CD4-positive, alpha-beta T cell (primary cell): ENCODE measurements at regions of chr6 and their contacts with region 1.

Region 1: GRCh38 chr6:139161817-139162284 is 27.0 kb downstream of the HECA start:
- DNase-seq: peak in 13 of 14 experiments; percentile 46 to 84 (median 66)
- ATAC-seq: peak; percentile 55
- H3K4me3 ChIP-seq: peak overlapping the region; percentile 11
- H3K4me3 Mint-ChIP-seq: peak overlapping the region; percentile 76
- H3K27ac ChIP-seq: peak overlapping the region; percentile 32 to 70
- H3K27ac Mint-ChIP-seq: peak overlapping the region; percentile 84
- H3K4me1 ChIP-seq: peaks cover 94% of the 10 kb centered on the region
- H3K4me1 Mint-ChIP-seq: peaks cover 88% of the 10 kb centered on the region
- H3K27me3 ChIP-seq: no peaks in the 10 kb centered on the region
- H3K27me3 Mint-ChIP-seq: no peaks in the 10 kb centered on the region
- CTCF ChIP-seq: no peak

Region 2: DNA sequence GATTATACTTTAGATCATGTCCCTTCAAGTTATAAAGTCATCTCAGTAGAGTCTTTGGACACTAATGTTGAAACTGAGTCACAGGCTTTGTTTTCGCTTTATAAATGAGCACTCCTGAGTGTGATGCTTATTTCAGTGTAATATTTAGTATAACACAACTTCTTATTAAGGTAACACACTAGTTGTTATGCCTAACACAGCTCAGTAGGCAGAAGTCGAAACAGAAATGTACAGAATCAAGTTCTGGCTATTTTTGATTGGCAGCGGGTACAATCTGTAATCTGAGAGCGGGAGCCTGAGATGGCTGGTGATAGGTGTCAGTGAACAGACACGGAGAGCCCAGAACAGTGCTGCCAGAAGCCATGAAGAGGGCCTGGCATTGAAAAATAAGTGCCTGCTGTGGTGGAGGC is 15.5 kb before region 1 on chr6:
- CTCF ChIA-PET with region 1: interaction called, 5 read pairs
- POLR2A ChIA-PET with region 1: interaction called, 157 read pairs
- intact Hi-C with region 1: loop called (anchors 1 to 2 kb)
- DNase-seq: peak in 1 of 14 experiments; percentile 38
- ATAC-seq: no peak
- H3K4me3 ChIP-seq: peak overlapping the region; percentile 29
- H3K4me3 Mint-ChIP-seq: peak overlapping the region; percentile 61
- H3K27ac ChIP-seq: peak overlapping the region in 1 of 2 donors; percentile 11
- H3K27ac Mint-ChIP-seq: peak overlapping the region; percentile 80
- H3K4me1 ChIP-seq: peaks cover 76% of the 10 kb centered on the region
- H3K4me1 Mint-ChIP-seq: peaks cover 95% of the 10 kb centered on the region
- H3K27me3 ChIP-seq: no peaks in the 10 kb centered on the region
- H3K27me3 Mint-ChIP-seq: no peaks in the 10 kb centered on the region
- CTCF ChIP-seq: no peak

Region 3: GRCh38 chr6:139173172-139173571 is 11.3 kb after region 1 on chr6:
- CTCF ChIA-PET with region 1: interaction called, 12 read pairs
- POLR2A ChIA-PET with region 1: interaction called, 13 read pairs
- intact Hi-C with region 1: loop called in 1 of 2 experiments (anchors 2 kb)
- DNase-seq: peak in 4 of 14 experiments; percentile 42 to 70 (median 54)
- ATAC-seq: peak; percentile 71
- H3K4me3 ChIP-seq: no peak overlapping the region
- H3K4me3 Mint-ChIP-seq: peak overlapping the region; percentile 40
- H3K27ac ChIP-seq: peak overlapping the region; percentile 31 to 49
- H3K27ac Mint-ChIP-seq: peak overlapping the region; percentile 48
- H3K4me1 ChIP-seq: peaks cover 69% of the 10 kb centered on the region
- H3K4me1 Mint-ChIP-seq: peaks cover 95% of the 10 kb centered on the region
- H3K27me3 ChIP-seq: no peaks in the 10 kb centered on the region
- H3K27me3 Mint-ChIP-seq: no peaks in the 10 kb centered on the region
- CTCF ChIP-seq: peak; percentile 39

Region 4: DNA sequence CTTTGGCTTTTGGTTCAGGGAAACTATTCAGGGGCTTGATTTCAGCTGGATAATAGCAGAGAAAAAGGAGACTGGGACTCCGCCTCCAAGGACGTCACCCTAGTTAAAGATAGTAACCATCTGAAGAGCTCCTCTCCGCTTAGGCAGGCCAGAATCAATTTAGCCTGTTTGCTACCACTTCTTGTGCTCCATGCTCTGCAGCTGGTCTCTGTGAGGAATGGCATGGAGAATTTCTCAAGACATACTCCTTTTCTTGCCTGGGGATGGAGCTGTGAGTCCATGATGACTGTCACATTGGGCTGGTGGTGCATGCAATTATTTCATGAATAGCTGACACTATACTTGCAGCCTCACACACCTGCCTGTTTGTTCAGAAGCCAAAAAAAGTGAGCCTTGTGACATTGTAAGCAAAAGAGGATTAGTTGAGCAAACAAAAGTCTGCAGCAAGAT is 68.6 kb after region 1 on chr6:
- CTCF ChIA-PET with region 1: no interaction called
- POLR2A ChIA-PET with region 1: no interaction called
- intact Hi-C with region 1: no loop called
- DNase-seq: peak in 4 of 14 experiments; percentile 18 to 45 (median 32)
- ATAC-seq: no peak
- H3K4me3 ChIP-seq: no peak overlapping the region
- H3K4me3 Mint-ChIP-seq: no peak overlapping the region
- H3K27ac ChIP-seq: no peak overlapping the region
- H3K27ac Mint-ChIP-seq: no peak overlapping the region
- H3K4me1 ChIP-seq: peaks cover 5% of the 10 kb centered on the region
- H3K4me1 Mint-ChIP-seq: peaks cover 7% of the 10 kb centered on the region
- H3K27me3 ChIP-seq: no peaks in the 10 kb centered on the region
- H3K27me3 Mint-ChIP-seq: no peaks in the 10 kb centered on the region
- CTCF ChIP-seq: no peak

Region 5: DNA sequence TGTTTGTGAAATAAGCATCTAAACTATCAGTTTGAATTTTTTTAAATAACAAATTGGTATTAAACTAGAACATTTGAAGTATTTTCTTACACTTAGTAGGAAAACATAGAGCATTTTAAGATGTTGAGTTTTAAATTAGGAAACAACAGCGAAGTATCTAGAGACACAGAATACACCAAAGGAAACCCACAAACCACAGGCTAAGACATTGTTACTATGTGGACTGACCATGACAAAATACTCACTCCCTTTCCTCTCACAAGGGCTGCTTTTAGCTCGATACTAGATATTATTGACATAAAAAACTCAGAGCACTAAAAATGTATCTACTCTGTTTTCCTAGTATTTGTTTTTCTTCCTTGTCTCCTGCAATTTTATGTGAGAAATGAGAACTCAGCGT is 478.6 kb after region 1 on chr6:
- CTCF ChIA-PET with region 1: no interaction called
- POLR2A ChIA-PET with region 1: no interaction called
- intact Hi-C with region 1: no loop called
- DNase-seq: peak in 1 of 14 experiments; percentile 2
- ATAC-seq: no peak
- H3K4me3 ChIP-seq: no peak overlapping the region
- H3K4me3 Mint-ChIP-seq: no peak overlapping the region
- H3K27ac ChIP-seq: no peak overlapping the region
- H3K27ac Mint-ChIP-seq: no peak overlapping the region
- H3K4me1 ChIP-seq: no peaks in the 10 kb centered on the region
- H3K4me1 Mint-ChIP-seq: no peaks in the 10 kb centered on the region
- H3K27me3 ChIP-seq: peaks cover 0 to 7% of the 10 kb centered on the region in 2 experiments
- H3K27me3 Mint-ChIP-seq: peaks cover 26% of the 10 kb centered on the region
- CTCF ChIP-seq: no peak